ENCODE measurements at regions of chr9 and their contacts with region 1.

Region 1: GRCh38 chr9:21234153-21234687 is 5.6 kb downstream of the IFNA14 start:
- DNase-seq: no peak
- H3K4me3 ChIP-seq: no peak overlapping the region
- CTCF ChIP-seq: no peak

Region 2: DNA sequence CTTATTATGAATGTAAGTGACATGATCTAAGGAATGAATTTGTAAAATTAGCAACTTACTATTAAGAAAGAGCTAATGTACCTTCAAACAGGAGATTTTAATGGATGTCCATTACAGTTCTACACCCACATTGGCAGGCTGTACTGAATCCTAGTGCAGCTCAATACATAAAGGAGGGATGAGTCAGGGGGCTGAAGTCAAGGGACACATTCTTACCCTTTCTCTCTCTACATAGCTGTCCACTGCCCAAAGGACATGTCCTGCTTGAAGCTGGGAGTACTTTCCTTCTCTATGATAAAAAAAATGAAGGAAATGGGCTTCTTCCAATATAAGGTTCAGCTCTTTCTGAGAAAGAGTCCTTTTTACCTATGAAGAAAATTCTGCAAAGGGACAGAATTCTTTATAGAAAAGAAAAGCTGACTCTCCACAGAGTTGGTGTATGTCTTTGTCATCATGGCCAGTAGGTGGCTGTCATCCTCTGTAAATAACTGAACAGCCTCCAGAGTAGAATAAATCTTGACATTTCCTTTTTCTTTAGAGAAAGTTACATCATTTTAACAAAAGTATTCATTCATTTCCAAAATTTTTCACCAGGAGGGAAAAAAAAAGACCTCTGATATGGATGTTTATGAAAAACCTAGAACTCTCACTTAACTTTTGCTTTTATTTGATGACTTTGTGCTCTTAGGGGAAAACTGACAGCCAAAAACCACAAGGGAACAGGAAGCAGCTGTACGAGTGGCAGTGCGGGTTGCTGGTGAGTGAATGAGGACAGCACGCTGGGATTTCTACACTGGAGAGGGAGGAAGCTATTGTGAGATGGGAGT is 18.7 kb after region 1 on chr9:
- CTCF ChIA-PET with region 1: interaction called, 21 read pairs
- POLR2A ChIA-PET with region 1: no interaction called
- DNase-seq: no peak
- H3K4me3 ChIP-seq: no peak overlapping the region
- CTCF ChIP-seq: peak; percentile 30

Measured in AG04449 (cell line).